RWPE1 (cell line): ENCODE measurements at regions of chr4 and their contacts with region 1.

Region 1: DNA sequence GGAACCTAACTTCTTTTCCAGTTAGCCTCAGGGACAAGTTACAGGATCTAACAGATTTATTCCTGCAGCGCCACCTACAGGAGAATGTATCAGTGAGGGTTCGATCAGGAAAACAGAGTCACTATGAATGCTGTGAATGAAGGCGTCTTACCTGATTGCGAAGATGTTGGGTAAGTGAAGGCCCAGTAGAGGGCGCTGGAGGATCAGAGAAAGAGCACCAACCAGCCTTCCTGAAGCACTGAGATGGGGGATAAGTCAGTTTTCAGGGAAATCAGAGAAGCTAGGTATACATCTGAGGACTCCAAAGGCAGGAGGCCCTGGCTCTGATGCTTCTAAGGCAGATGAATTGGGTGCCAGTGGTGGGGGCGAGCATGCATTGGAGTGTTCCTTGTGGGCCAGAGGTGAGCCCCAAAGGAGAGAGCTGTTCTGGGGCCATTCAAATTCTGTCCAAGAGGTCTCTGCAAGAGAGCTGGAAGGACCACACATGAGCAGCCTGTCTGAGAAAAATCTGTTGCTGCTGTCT is 169.9 kb upstream of the AADAT start:
- DNase-seq: peak; percentile 68
- H3K27ac ChIP-seq: no peak overlapping the region
- CTCF ChIP-seq: peak; percentile 83

Region 2: DNA sequence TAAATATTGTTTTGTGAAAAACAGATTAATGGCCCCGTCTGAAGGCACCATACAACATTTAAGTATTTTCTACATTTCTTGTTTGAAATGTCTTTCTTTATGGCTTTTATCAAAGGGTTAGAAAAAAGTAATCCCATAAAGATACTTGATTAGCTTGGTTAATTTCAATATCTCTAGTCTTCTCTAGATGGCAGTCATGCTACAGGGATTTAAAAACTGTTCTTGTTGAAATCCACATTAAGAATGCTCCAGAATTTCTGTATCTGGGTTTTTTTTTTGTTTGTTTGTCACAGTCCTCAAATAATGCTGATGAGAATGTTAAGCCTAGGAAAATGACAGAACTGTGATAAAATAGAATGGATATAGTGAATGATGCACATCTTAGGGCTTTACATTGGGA is 60.9 kb before region 1 on chr4:
- CTCF ChIA-PET with region 1: interaction called, 11 read pairs
- POLR2A ChIA-PET with region 1: no interaction called
- DNase-seq: peak; percentile 24
- H3K27ac ChIP-seq: no peak overlapping the region
- CTCF ChIP-seq: peak; percentile 54; the same call in 1 of the 2 replicates

Region 3: DNA sequence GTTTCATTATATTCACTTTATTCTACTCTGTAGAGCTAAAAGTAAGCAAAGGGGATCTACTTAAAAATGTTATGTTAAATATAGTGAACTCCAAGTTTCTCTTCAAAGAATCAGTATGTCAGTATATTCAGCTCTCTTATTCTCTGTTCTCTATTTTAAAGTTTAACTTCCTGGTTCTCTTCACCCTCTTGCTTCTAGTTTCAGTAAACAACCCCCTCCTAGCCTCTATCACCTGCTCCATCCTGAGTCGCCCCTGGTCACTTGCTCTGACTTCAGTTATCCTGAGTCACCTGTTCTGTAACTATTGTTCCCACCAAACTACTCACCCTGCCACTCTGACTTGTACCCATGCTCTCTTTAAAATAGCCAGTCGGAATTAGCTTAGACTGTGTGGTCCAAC is 10.9 kb after region 1 on chr4:
- CTCF ChIA-PET with region 1: interaction called, 10 read pairs
- POLR2A ChIA-PET with region 1: no interaction called
- DNase-seq: no peak
- H3K27ac ChIP-seq: no peak overlapping the region
- CTCF ChIP-seq: no peak